ENCODE measurements at regions of chr9 and their contacts with region 1.

Region 1: DNA sequence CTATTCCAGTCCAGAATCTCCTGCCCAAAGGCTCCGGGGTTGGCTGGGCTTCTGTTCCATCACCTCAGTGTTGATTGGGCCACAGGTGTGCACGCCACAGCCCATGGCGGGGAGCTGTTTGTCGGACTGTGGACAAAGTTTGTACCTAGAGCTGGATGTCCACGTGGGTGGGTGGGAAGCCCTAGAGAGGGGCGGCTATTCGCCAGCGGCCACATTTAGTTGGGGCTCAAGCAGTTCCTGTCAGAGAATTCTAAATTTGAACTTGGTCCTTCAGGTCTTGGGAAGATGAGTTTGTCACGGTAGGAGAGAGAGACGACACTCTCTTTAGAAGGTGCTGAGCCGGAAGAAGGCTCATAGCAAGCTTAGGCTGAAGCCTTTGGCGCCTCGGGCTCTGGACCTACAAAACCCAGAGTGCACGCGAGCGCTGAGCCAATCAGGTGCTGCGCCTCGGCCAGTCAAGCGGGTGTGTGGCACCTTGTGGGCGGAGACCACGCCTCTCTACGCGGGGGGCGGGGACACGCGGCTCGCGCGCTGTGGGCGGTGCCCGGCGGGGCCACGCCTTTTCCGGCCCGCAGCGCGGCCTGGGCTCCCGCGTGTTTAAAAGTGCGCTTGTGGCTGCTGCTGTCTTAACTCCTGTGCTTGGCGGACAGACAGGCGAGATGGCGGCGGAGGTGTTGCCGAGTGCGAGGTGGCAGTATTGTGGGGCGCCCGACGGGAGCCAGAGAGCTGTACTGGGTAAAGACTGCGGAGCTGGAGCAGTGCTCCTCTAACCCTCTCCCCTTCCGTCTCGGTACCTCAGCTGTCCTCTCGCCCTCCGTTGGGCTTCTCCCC is at the start of gene POLR1E:
- H3K4me3 Mint-ChIP-seq: peak within 1 kb of the TSS; percentile 92
- H3K27ac Mint-ChIP-seq: peak within 1 kb of the TSS; percentile 86
- H3K4me1 Mint-ChIP-seq: peaks cover 35% of the 10 kb centered on the region
- H3K27me3 Mint-ChIP-seq: peaks cover 6% of the 10 kb centered on the region

Region 2: GRCh38 chr9:37422289-37423104 is 63.1 kb before region 1 on chr9 and contains the start of gene GRHPR:
- intact Hi-C with region 1: loop called (anchors 5 kb)
- H3K4me3 Mint-ChIP-seq: peak within 1 kb of the TSS; percentile 96
- H3K27ac Mint-ChIP-seq: peak within 1 kb of the TSS; percentile 95
- H3K4me1 Mint-ChIP-seq: peaks cover 31% of the 10 kb centered on the region
- H3K27me3 Mint-ChIP-seq: no peaks in the 10 kb centered on the region

Region 3: GRCh38 chr9:37465249-37466036 is 20.2 kb before region 1 on chr9 and contains the start of gene ZBTB5:
- intact Hi-C with region 1: loop called (anchors 1 kb)
- H3K4me3 Mint-ChIP-seq: peak within 1 kb of the TSS; percentile 92
- H3K27ac Mint-ChIP-seq: peak within 1 kb of the TSS; percentile 96
- H3K4me1 Mint-ChIP-seq: peaks cover 45% of the 10 kb centered on the region
- H3K27me3 Mint-ChIP-seq: no peaks in the 10 kb centered on the region

Region 4: DNA sequence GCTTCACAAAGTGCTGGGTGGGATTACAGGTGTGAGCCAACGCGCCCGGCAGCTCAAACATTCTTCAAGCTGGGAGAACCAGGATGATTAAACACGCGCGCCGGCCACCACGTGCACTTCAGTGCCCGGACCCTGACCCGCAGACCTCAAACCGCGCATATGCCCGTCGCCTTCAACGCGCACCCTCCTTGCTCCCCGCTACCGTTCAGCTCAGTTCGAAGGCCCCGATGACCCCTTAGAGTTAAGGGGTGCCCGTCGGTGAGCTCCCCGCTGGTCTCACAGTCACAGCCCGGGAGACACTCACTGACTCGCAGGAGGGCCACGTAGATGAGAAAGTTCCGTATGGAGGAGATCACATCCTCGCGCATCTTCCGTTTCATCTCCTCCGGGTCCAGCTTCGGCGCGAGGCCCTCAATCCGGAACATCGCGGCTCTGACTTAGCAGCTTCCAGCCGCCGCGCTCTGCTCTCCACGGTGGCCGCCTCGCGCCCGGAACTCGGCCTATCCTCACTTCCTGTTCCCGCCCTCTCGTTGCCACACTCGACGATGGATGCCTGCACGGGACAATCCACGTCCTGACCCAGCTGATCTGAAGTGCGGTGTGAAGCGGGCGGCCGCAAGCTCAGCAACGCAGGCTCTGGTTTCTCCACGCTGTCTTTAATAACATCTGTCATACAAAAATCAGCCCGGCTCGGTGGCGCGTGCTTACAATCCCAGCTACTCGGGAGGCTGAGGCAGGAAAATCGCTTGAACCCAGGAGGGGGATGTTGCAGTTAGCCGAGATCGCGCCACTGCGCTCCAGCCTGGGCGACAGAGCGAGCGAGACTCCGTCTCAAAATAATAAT is 106.7 kb after region 1 on chr9 and contains the start of gene TOMM5:
- intact Hi-C with region 1: loop called (anchors 5 kb)
- H3K4me3 Mint-ChIP-seq: peak within 1 kb of the TSS; percentile 99
- H3K27ac Mint-ChIP-seq: peak within 1 kb of the TSS; percentile 95
- H3K4me1 Mint-ChIP-seq: peaks cover 27% of the 10 kb centered on the region
- H3K27me3 Mint-ChIP-seq: peaks cover 8% of the 10 kb centered on the region

Region 5: GRCh38 chr9:37753489-37754190 is 268.0 kb after region 1 on chr9 and contains the start of gene TRMT10B:
- intact Hi-C with region 1: loop called (anchors 5 kb)
- H3K4me3 Mint-ChIP-seq: peak within 1 kb of the TSS; percentile 95
- H3K27ac Mint-ChIP-seq: peak within 1 kb of the TSS; percentile 94
- H3K4me1 Mint-ChIP-seq: peaks cover 18% of the 10 kb centered on the region
- H3K27me3 Mint-ChIP-seq: no peaks in the 10 kb centered on the region

Measured in dendritic cell treated with granulocyte-macrophage colony-stimulating factor and Interleukin-4, amounts not matched to agents 40 ng/mL and 50 ng/mL, for 4 days (primary cell).